ENCODE measurements at regions of chr2 and their contacts with region 1.

Region 1: GRCh38 chr2:205496772-205497171 is 185.5 kb upstream of the NRP2 start:
- DNase-seq: no peak
- ATAC-seq: no peak
- H3K4me3 ChIP-seq: no peak overlapping the region
- H3K4me3 Mint-ChIP-seq: no peak overlapping the region
- H3K27ac ChIP-seq: no peak overlapping the region
- H3K27ac Mint-ChIP-seq: no peak overlapping the region
- H3K4me1 ChIP-seq: no peaks in the 10 kb centered on the region
- H3K4me1 Mint-ChIP-seq: peaks cover 0 to 10% (median 0%) of the 10 kb centered on the region in 7 donors
- H3K27me3 ChIP-seq: no peaks in the 10 kb centered on the region
- H3K27me3 Mint-ChIP-seq: peaks cover 0 to 18% (median 0%) of the 10 kb centered on the region in 5 donors

Region 2: GRCh38 chr2:204370172-204370743 is 1126.5 kb before region 1 on chr2:
- CTCF ChIA-PET with region 1: no interaction called
- POLR2A ChIA-PET with region 1: interaction called, 13 read pairs
- intact Hi-C with region 1: no loop called
- DNase-seq: no peak
- ATAC-seq: no peak
- H3K4me3 ChIP-seq: no peak overlapping the region
- H3K4me3 Mint-ChIP-seq: no peak overlapping the region
- H3K27ac ChIP-seq: no peak overlapping the region
- H3K27ac Mint-ChIP-seq: peak overlapping the region in 1 of 9 donors; percentile 48
- H3K4me1 ChIP-seq: no peaks in the 10 kb centered on the region
- H3K4me1 Mint-ChIP-seq: no peaks in the 10 kb centered on the region
- H3K27me3 ChIP-seq: no peaks in the 10 kb centered on the region
- H3K27me3 Mint-ChIP-seq: peaks cover 10 to 17% (median 15%) of the 10 kb centered on the region in 5 donors

Region 3: DNA sequence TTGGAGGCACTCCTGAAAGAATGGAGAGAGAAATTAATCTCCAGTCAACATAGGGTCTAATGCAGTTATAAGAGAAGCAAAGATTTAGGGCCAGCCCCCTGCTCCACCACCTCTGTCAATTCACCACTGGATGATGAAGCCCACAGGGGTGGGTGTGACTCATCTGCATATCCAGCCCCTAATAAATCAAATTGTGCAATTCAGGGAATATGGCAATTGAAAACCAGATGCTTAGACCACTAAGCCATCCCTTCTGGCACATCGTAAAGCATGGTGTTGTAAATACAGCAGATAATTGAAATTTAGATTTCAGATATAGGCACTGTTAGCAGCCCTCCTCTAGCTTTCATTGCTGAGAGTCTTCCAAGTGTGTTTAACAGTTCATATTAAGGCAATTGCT is 410.1 kb before region 1 on chr2:
- CTCF ChIA-PET with region 1: no interaction called
- POLR2A ChIA-PET with region 1: no interaction called
- intact Hi-C with region 1: no loop called
- DNase-seq: no peak
- ATAC-seq: no peak
- H3K4me3 ChIP-seq: no peak overlapping the region
- H3K4me3 Mint-ChIP-seq: no peak overlapping the region
- H3K27ac ChIP-seq: no peak overlapping the region
- H3K27ac Mint-ChIP-seq: no peak overlapping the region
- H3K4me1 ChIP-seq: peaks cover 0 to 18% of the 10 kb centered on the region in 2 donors
- H3K4me1 Mint-ChIP-seq: peaks cover 6 to 71% (median 57%) of the 10 kb centered on the region in 7 donors
- H3K27me3 ChIP-seq: no peaks in the 10 kb centered on the region
- H3K27me3 Mint-ChIP-seq: no peaks in the 10 kb centered on the region

Measured in naive thymus-derived CD4-positive, alpha-beta T cell (primary cell).